CD8-positive, alpha-beta memory T cell (primary cell): ENCODE measurements at regions of chr2 and their contacts with region 1.

Region 1: DNA sequence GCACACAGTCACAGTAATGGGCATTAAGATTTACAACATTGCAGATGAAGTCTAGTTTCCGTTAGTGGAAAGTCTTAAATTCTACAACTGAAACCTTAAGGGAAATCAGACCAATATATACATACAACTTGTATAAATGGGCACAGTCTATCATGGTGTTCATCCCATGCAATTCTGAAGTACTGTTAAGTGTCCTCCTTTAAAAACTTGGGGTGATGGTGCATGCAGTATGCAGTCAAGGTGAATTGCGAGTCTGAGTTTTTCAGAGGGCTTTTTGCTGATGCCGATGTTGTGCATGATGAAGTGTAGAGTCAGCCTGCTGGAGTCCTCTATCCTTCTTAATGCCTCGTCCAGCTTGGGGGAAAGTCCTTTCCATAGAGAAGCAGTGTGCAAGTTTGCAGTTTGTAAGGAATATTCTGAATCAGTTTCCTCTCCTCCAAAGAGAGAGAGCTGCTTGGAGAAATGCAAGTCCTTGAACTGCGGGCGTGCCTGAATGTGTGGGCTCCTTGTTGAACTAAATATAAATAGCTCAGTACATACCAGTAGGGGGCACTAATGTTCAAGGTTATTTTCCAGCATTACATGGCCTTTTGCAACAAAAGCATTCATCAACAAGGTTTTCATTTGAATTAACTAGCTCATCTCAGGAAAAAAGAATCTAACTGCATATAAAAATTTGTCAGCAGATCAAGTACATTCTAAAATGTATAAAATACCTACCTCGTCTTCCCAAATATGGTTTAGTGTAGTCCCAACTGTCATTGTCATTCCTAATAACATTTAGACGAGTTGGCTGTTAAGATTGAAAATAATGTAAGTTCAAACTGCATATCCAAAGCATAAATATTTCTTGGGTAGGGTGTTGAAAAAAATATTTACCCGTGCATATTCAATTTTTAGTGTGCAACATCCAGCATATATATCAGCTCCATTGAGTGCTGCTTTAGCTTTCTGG is 21.3 kb downstream of the HNRNPLL start:
- DNase-seq: peak in 3 of 5 donors; percentile 63 to 73 (median 66)
- H3K4me3 ChIP-seq: no peak overlapping the region
- H3K4me3 Mint-ChIP-seq: no peak overlapping the region
- H3K27ac ChIP-seq: no peak overlapping the region
- H3K27ac Mint-ChIP-seq: peak overlapping the region in 7 of 8 donors; percentile 9 to 92 (median 56)
- H3K4me1 ChIP-seq: peaks cover 8% of the 10 kb centered on the region
- H3K4me1 Mint-ChIP-seq: peaks cover 31 to 64% (median 64%) of the 10 kb centered on the region in 3 donors
- H3K27me3 ChIP-seq: no peaks in the 10 kb centered on the region
- H3K27me3 Mint-ChIP-seq: no peaks in the 10 kb centered on the region

Region 2: GRCh38 chr2:38535744-38536506 is 45.5 kb before region 1 on chr2:
- CTCF ChIA-PET with region 1: interaction called, 10 read pairs
- POLR2A ChIA-PET with region 1: no interaction called
- DNase-seq: peak; percentile 62 to 82 (median 68)
- H3K4me3 ChIP-seq: peak overlapping the region; percentile 41
- H3K4me3 Mint-ChIP-seq: peak overlapping the region in 5 of 7 donors; percentile 45 to 69 (median 59)
- H3K27ac ChIP-seq: no peak overlapping the region
- H3K27ac Mint-ChIP-seq: no peak overlapping the region
- H3K4me1 ChIP-seq: no peaks in the 10 kb centered on the region
- H3K4me1 Mint-ChIP-seq: peaks cover 3 to 8% (median 3%) of the 10 kb centered on the region in 3 donors
- H3K27me3 ChIP-seq: no peaks in the 10 kb centered on the region
- H3K27me3 Mint-ChIP-seq: peaks cover 9 to 12% of the 10 kb centered on the region in 2 donors

Region 3: GRCh38 chr2:38665854-38666555 is 84.5 kb after region 1 on chr2 and contains the start of gene GALM:
- CTCF ChIA-PET with region 1: interaction called, 13 read pairs
- POLR2A ChIA-PET with region 1: no interaction called
- DNase-seq: peak; percentile 17 to 76 (median 55)
- H3K4me3 ChIP-seq: peak within 1 kb of the TSS; percentile 88
- H3K4me3 Mint-ChIP-seq: peak within 1 kb of the TSS; percentile 82 to 95 (median 88)
- H3K27ac ChIP-seq: peak within 1 kb of the TSS; percentile 60
- H3K27ac Mint-ChIP-seq: peak within 1 kb of the TSS; percentile 91 to 100 (median 99)
- H3K4me1 ChIP-seq: peaks cover 37% of the 10 kb centered on the region
- H3K4me1 Mint-ChIP-seq: peaks cover 56 to 69% (median 66%) of the 10 kb centered on the region in 3 donors
- H3K27me3 ChIP-seq: no peaks in the 10 kb centered on the region
- H3K27me3 Mint-ChIP-seq: no peaks in the 10 kb centered on the region
- total RNA-seq, gene GALM: 107 to 109 TPM

Region 4: DNA sequence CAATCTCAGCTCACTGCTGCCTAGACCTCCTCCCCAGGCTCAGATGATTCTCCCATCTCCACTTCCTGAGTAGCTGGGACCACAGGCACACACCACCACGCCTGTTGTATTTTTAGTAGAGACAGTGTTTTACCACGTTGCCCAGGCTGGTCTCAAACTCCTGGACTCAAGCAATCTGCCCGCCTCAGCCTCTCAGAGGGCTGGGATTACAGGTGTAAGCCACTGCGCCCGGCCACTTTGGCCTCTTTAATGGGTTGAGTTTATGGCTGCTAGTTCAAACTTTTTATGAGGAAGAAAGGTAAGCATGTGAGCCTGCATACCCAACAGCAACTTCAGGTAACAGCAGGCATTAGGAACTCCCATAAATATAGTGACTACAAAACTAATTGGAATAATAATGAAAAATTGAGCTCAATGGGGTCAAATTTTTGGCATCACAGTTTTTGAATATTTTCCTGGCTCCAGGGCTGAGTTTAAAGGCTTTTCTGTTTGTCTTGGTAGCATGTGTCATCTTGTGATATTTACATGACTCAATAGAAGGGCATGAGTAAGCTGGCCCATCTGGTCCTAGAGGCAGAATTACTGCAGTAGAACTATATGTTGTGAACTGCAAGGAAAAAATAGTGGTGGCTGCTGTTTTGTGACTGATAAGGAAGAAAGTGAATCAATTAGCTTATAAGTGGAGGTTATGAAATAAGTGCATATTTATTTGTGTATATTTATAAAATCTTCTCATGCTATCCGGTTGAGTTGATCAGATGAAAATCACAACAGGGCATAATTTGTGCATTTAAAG is 109.2 kb after region 1 on chr2:
- CTCF ChIA-PET with region 1: interaction called, 11 read pairs
- POLR2A ChIA-PET with region 1: interaction called, 3 read pairs
- DNase-seq: no peak
- H3K4me3 ChIP-seq: no peak overlapping the region
- H3K4me3 Mint-ChIP-seq: peak overlapping the region in 5 of 7 donors; percentile 7 to 55 (median 42)
- H3K27ac ChIP-seq: peak overlapping the region; percentile 24
- H3K27ac Mint-ChIP-seq: peak overlapping the region; percentile 8 to 93 (median 68)
- H3K4me1 ChIP-seq: peaks cover 39% of the 10 kb centered on the region
- H3K4me1 Mint-ChIP-seq: peaks cover 44 to 74% (median 72%) of the 10 kb centered on the region in 3 donors
- H3K27me3 ChIP-seq: no peaks in the 10 kb centered on the region
- H3K27me3 Mint-ChIP-seq: no peaks in the 10 kb centered on the region

Region 5: DNA sequence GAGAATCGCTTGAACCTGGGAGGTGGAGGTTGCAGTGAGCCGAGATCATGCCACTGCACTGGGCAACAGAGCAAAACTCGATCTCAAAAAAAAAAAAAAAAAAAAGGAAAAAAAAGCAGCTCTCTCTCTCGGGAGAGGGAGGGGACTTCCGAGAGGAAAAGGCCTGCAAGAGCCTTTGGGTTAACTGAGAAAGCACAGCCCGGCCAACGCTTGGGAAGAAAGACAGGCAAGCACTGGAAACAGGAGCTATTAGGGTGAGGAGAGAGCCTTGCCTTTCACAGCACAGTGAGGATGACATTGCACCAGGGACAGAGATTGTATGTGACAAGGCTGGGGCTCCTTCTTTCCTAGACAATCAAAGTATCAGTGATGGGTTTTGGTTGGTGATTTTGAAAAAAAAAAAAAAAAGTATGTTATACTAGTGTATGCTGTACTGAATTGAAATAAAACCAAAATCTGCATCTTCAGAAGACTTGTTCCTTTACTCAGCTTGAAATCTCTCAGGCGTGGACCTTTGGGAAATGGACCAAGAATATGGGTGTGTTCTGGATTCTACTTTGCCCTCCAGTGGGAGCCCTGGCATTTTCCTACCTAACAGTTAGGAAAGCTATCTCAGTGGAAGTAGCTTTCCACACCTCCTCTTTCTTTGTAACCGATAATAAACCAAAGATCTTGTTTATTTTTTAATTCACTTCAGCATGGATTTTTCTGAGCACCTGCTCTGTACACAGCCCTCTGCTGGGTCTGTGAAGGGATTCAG is 153.0 kb after region 1 on chr2:
- CTCF ChIA-PET with region 1: interaction called, 21 read pairs
- POLR2A ChIA-PET with region 1: no interaction called
- DNase-seq: no peak
- H3K4me3 ChIP-seq: no peak overlapping the region
- H3K4me3 Mint-ChIP-seq: no peak overlapping the region
- H3K27ac ChIP-seq: no peak overlapping the region
- H3K27ac Mint-ChIP-seq: peak overlapping the region in 4 of 8 donors; percentile 7 to 74 (median 26)
- H3K4me1 ChIP-seq: no peaks in the 10 kb centered on the region
- H3K4me1 Mint-ChIP-seq: peaks cover 13 to 18% (median 14%) of the 10 kb centered on the region in 3 donors
- H3K27me3 ChIP-seq: no peaks in the 10 kb centered on the region
- H3K27me3 Mint-ChIP-seq: no peaks in the 10 kb centered on the region

Region 6: GRCh38 chr2:38750891-38751595 is 169.6 kb after region 1 on chr2 and contains the start of gene SRSF7:
- CTCF ChIA-PET with region 1: interaction called, 10 read pairs
- POLR2A ChIA-PET with region 1: interaction called, 8 read pairs
- DNase-seq: peak; percentile 95 to 99 (median 96)
- H3K4me3 ChIP-seq: peak within 1 kb of the TSS; percentile 96
- H3K4me3 Mint-ChIP-seq: peak within 1 kb of the TSS; percentile 95 to 100 (median 99)
- H3K27ac ChIP-seq: peak within 1 kb of the TSS; percentile 98
- H3K27ac Mint-ChIP-seq: peak within 1 kb of the TSS; percentile 98 to 100 (median 100)
- H3K4me1 ChIP-seq: peaks cover 55% of the 10 kb centered on the region
- H3K4me1 Mint-ChIP-seq: peaks cover 61 to 67% (median 65%) of the 10 kb centered on the region in 3 donors
- H3K27me3 ChIP-seq: no peaks in the 10 kb centered on the region
- H3K27me3 Mint-ChIP-seq: peaks cover 0 to 18% of the 10 kb centered on the region in 2 donors
- total RNA-seq, gene SRSF7: 378 to 381 TPM